ENCODE measurements at regions of chr2 and their contacts with region 1.

Region 1: GRCh38 chr2:85154048-85154753 is 21.0 kb downstream of the TCF7L1 start:
- DNase-seq: peak; percentile 47
- H3K4me3 ChIP-seq: no peak overlapping the region
- H3K27ac ChIP-seq: peak overlapping the region; percentile 13
- H3K4me1 ChIP-seq: peaks cover 30% of the 10 kb centered on the region
- H3K27me3 ChIP-seq: no peaks in the 10 kb centered on the region
- CTCF ChIP-seq: no peak

Region 2: DNA sequence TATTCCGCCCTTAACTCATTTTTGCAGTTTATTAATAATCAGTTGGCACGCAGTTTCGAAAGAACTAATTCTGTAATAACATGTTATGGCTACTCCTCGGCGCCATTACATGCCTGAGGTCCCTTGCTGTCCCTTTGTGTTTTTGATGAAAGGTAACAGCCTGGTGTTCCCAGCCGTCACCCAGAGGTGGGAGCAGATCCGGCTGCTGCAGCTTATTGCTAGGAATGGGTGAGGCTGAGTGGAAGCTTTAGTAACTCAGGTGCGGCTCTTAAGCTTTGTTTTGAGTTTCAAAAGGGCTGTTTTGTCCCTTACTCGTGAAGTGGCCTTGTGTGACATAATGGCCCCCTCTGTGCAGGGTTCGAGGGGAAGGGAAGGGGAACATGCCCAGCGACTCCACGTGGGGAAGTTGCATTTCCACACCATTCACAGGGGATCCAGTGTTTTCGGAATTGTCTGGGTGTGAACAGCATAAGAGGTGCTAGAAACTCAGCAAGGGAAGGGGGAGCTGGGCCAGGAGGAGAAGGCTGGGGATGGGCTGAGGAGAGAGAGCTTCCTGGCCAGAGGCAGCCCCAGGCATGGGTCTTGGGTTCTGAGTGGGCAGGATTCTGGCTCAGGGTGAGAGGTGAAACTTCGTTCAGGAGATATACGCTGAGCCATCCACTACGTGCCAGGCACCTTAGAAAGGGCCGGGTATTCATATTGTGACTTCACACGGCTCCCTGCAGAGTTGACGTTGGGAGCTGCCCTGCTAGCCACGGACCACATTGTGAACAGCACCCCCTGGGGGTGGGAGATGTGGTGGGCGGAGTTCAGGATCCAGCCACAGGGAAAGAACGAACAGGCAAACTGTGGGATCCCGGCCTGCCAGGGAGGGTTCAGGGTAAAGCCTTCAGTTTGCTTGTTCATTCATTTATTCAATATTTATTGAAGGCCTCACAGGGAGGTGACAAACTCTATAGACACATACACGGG is 89.2 kb after region 1 on chr2:
- CTCF ChIA-PET with region 1: interaction called, 11 read pairs
- dilution Hi-C with region 1: no loop called
- in situ Hi-C with region 1: no loop called
- intact Hi-C with region 1: no loop called
- DNase-seq: no peak
- H3K4me3 ChIP-seq: no peak overlapping the region
- H3K27ac ChIP-seq: no peak overlapping the region
- H3K4me1 ChIP-seq: peaks cover 16% of the 10 kb centered on the region
- H3K27me3 ChIP-seq: no peaks in the 10 kb centered on the region
- CTCF ChIP-seq: peak; percentile 23 to 37